ENCODE measurements at regions of chr10 and their contacts with region 1.

Region 1: GRCh38 chr10:30783939-30784500 is 154.5 kb upstream of the LYZL2 start:
- DNase-seq: peak; percentile 84 to 85 (median 84)
- ATAC-seq: peak; percentile 82
- H3K4me3 ChIP-seq: no peak overlapping the region
- H3K4me1 ChIP-seq: peaks cover 10% of the 10 kb centered on the region
- CTCF ChIP-seq: peak; percentile 49

Region 2: GRCh38 chr10:29804025-29804852 is 979.8 kb before region 1 on chr10:
- intact Hi-C with region 1: no loop called
- DNase-seq: peak in 1 of 3 donors; percentile 46
- ATAC-seq: peak; percentile 83
- H3K4me3 ChIP-seq: no peak overlapping the region
- H3K4me1 ChIP-seq: peaks cover 4% of the 10 kb centered on the region
- CTCF ChIP-seq: no peak

Region 3: DNA sequence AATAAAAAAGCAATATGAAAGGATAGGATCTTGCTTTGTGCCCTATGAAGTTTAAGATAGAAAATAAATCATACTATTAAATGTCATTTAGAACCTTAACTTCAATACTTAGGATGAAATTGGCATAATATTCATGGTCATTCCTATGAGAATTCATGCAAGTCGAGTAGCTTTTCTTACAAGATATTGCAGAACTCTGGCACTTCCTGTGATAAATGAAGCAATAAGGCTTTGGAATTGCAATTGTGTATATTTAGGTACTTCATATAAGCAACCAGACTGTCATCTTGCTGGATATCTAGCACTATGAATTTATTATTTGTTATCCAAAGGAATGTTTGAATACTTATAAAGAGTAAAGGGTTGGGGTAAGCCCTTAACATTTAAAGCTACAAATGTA is 131.1 kb after region 1 on chr10:
- intact Hi-C with region 1: no loop called
- DNase-seq: no peak
- ATAC-seq: no peak
- H3K4me3 ChIP-seq: no peak overlapping the region
- H3K4me1 ChIP-seq: no peaks in the 10 kb centered on the region
- CTCF ChIP-seq: no peak

Region 4: DNA sequence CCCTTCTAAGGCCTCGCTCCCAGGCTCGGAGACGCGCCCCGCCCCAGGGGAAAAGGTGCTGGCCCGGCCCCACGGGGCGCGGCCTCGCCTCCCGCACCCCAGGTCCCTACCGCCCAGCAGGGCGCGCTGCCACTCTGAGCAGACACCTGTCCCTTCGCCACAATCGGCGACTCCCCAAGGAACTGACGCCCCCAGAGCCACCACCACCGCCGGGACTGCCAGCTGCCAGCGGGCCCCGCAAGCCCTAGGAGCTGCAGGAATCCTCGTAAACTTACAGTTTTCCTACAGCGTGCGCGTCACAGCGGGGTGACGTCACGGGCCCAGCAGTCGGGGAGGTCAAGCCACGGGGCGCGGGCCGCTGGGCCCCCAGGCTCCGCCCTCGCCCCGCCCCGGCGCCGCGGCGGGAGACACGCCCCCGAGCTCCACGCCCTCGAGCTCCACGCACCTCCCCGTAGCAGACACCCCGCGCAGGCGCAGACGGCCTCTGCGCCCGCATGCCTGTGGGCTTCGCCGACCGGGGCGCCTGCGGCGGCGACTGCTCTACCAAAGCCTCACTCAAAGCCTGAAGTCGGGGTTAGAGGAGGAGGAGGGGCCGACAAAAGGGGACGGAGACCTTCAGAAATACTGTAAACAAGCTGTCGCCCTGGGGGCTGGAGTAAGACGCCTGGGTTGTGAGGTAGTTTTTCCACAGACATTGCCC is 247.7 kb after region 1 on chr10 and contains the start of gene ZNF438:
- intact Hi-C with region 1: loop called in 1 of 2 experiments (anchors 10 kb)
- DNase-seq: peak; percentile 94 to 98 (median 97)
- ATAC-seq: peak; percentile 97
- H3K4me3 ChIP-seq: peak within 1 kb of the TSS; percentile 35
- H3K4me1 ChIP-seq: peaks cover 3% of the 10 kb centered on the region
- CTCF ChIP-seq: peak; percentile 62
- total RNA-seq, gene ZNF438: 4.7 to 12.3 (median 5.0) TPM